IMR-90 (cell line): ENCODE measurements at regions of chr2 and their contacts with region 1.

Region 1: GRCh38 chr2:148509288-148509902 is 135.2 kb upstream of the EPC2 start:
- DNase-seq: peak; percentile 82
- ATAC-seq: peak; percentile 100
- H3K4me3 ChIP-seq: no peak overlapping the region; the same call in 1 of the 2 replicates
- H3K27ac ChIP-seq: no peak overlapping the region
- H3K4me1 ChIP-seq: no peaks in the 10 kb centered on the region
- H3K27me3 ChIP-seq: no peaks in the 10 kb centered on the region
- CTCF ChIP-seq: peak; percentile 95
- POLR2A ChIP-seq: no peak
- RAD21 ChIP-seq: peak; percentile 92

Region 2: GRCh38 chr2:147937744-147938349 is 571.5 kb before region 1 on chr2:
- CTCF ChIA-PET with region 1: interaction called, 3 read pairs
- POLR2A ChIA-PET with region 1: no interaction called
- dilution Hi-C with region 1: no loop called
- in situ Hi-C with region 1: no loop called
- intact Hi-C with region 1: loop called (anchors 1 kb)
- DNase-seq: peak; percentile 40
- ATAC-seq: peak; percentile 83
- H3K4me3 ChIP-seq: no peak overlapping the region
- H3K27ac ChIP-seq: no peak overlapping the region
- H3K4me1 ChIP-seq: no peaks in the 10 kb centered on the region
- H3K27me3 ChIP-seq: no peaks in the 10 kb centered on the region
- CTCF ChIP-seq: peak; percentile 84
- POLR2A ChIP-seq: no peak
- RAD21 ChIP-seq: peak; percentile 73

Region 3: GRCh38 chr2:147989809-147990403 is 519.5 kb before region 1 on chr2:
- CTCF ChIA-PET with region 1: interaction called, 17 read pairs
- POLR2A ChIA-PET with region 1: no interaction called
- dilution Hi-C with region 1: no loop called
- in situ Hi-C with region 1: loop called (anchors 5 kb)
- intact Hi-C with region 1: loop called (anchors 1 kb)
- DNase-seq: peak; percentile 72
- ATAC-seq: peak; percentile 95
- H3K4me3 ChIP-seq: no peak overlapping the region
- H3K27ac ChIP-seq: no peak overlapping the region
- H3K4me1 ChIP-seq: no peaks in the 10 kb centered on the region; the same call in none of the 2 replicates
- H3K27me3 ChIP-seq: no peaks in the 10 kb centered on the region
- CTCF ChIP-seq: peak; percentile 99
- POLR2A ChIP-seq: no peak
- RAD21 ChIP-seq: peak; percentile 96

Region 4: GRCh38 chr2:148020111-148021058 is 489.0 kb before region 1 on chr2 and contains the start of gene ORC4:
- CTCF ChIA-PET with region 1: interaction called, 3 read pairs
- POLR2A ChIA-PET with region 1: no interaction called
- dilution Hi-C with region 1: no loop called
- in situ Hi-C with region 1: no loop called
- intact Hi-C with region 1: loop called (anchors 1 kb)
- DNase-seq: peak; percentile 99
- ATAC-seq: peak; percentile 95
- H3K4me3 ChIP-seq: peak within 1 kb of the TSS; percentile 96
- H3K27ac ChIP-seq: peak within 1 kb of the TSS; percentile 92
- H3K4me1 ChIP-seq: 0 out of 2 replicates have a peak, but pooled peaks cover 2% of the 10 kb centered on the region
- H3K27me3 ChIP-seq: no peaks in the 10 kb centered on the region
- CTCF ChIP-seq: peak; percentile 38
- POLR2A ChIP-seq: peak; percentile 26; the same call in 1 of the 2 replicates
- RAD21 ChIP-seq: peak; percentile 27
- total RNA-seq, gene ORC4: 23.5 and 63.9 TPM in 2 replicates

Region 5: GRCh38 chr2:148201075-148202004 is 308.1 kb before region 1 on chr2:
- CTCF ChIA-PET with region 1: interaction called, 3 read pairs
- POLR2A ChIA-PET with region 1: no interaction called
- dilution Hi-C with region 1: no loop called
- in situ Hi-C with region 1: no loop called
- intact Hi-C with region 1: loop called (anchors 10 kb)
- DNase-seq: peak; percentile 31
- ATAC-seq: peak; percentile 40
- H3K4me3 ChIP-seq: no peak overlapping the region
- H3K27ac ChIP-seq: no peak overlapping the region
- H3K4me1 ChIP-seq: no peaks in the 10 kb centered on the region
- H3K27me3 ChIP-seq: no peaks in the 10 kb centered on the region
- CTCF ChIP-seq: peak; percentile 41
- POLR2A ChIP-seq: no peak
- RAD21 ChIP-seq: peak; percentile 57